Activated T-helper 1 cell treated with anti-CD3 and anti-CD28 coated beads, Interleukin-12 subunit alpha, Interleukin-12 subunit beta, Interleukin-2, Interleukin-4 antibody, amounts not matched to agents 30 ng/mL and 10 ng/mL and 1 ng/mL, durations not matched to agents 14 hours and 24 hours and 36 hours (primary cell): ENCODE measurements at regions of chr14 and their contacts with region 1.

Region 1: GRCh38 chr14:52552063-52552988 is at the starts of genes GPR137C and TXNDC16:
- DNase-seq: peak; percentile 99
- H3K4me3 Mint-ChIP-seq: peak within 1 kb of the TSS; percentile 92
- H3K27ac Mint-ChIP-seq: peak within 1 kb of the TSS; percentile 91
- H3K4me1 Mint-ChIP-seq: peaks cover 40% of the 10 kb centered on the region
- H3K27me3 Mint-ChIP-seq: peaks cover 25% of the 10 kb centered on the region
- total RNA-seq, gene GPR137C: 0.10 and 0.34 TPM in 2 replicates
- total RNA-seq, gene TXNDC16: 4.0 and 4.8 TPM in 2 replicates

Region 2: DNA sequence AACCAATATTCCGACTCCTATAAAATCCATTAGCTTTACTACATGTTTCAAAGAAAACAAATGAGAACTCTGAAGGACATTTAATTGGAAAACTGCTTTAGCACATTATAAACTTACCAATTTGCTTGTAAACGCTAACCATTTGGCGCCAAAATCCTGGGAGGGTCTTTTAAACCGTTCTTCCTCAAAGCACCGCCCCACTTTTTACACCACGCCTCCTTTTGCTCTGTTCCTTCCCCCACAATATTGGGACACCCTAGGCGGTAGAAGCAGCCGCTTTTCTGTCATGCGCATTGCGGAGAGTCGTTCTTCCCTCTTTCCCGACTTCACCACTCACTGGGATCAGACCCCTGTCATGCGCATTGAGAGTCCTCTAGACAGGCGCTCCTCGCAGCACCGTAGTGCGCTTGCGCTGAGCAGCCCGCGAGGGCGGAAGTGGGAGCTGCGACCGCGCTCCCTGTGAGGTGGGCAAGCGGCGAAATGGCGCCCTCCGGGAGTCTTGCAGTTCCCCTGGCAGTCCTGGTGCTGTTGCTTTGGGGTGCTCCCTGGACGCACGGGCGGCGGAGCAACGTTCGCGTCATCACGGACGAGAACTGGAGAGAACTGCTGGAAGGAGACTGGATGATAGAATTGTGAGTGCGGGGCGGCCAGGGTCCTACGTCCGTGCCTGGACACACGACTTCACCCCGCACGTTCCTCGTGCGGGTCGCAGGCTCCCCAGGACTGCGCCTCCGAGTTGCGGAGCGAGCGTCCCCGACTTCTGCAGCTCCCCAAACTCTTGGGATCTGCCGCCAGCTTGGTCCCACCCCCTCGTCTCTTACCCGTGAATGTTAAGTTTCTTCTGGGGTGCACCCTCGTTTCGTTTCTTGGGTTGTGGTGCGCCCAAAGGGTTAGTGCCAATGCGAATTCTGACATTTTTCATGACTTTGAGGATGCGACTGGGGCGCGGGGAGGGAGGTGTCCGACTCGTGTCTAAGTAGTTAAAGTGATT is 1312.2 kb before region 1 on chr14 and contains the start of gene TMX1:
- intact Hi-C with region 1: loop called (anchors 2 kb)
- DNase-seq: peak; percentile 87
- H3K4me3 Mint-ChIP-seq: no peak within 1 kb of the TSS
- H3K27ac Mint-ChIP-seq: no peak within 1 kb of the TSS
- H3K4me1 Mint-ChIP-seq: peaks cover 12% of the 10 kb centered on the region
- H3K27me3 Mint-ChIP-seq: no peaks in the 10 kb centered on the region
- total RNA-seq, gene TMX1: 51.1 and 51.3 TPM in 2 replicates

Region 3: GRCh38 chr14:51989293-51990234 is 562.8 kb before region 1 on chr14 and contains the start of gene RTRAF:
- intact Hi-C with region 1: loop called (anchors 1 kb)
- DNase-seq: peak; percentile 89
- H3K4me3 Mint-ChIP-seq: peak within 1 kb of the TSS; percentile 94
- H3K27ac Mint-ChIP-seq: peak within 1 kb of the TSS; percentile 91
- H3K4me1 Mint-ChIP-seq: peaks cover 31% of the 10 kb centered on the region
- H3K27me3 Mint-ChIP-seq: no peaks in the 10 kb centered on the region
- total RNA-seq, gene RTRAF: 215 and 230 TPM in 2 replicates

Region 4: DNA sequence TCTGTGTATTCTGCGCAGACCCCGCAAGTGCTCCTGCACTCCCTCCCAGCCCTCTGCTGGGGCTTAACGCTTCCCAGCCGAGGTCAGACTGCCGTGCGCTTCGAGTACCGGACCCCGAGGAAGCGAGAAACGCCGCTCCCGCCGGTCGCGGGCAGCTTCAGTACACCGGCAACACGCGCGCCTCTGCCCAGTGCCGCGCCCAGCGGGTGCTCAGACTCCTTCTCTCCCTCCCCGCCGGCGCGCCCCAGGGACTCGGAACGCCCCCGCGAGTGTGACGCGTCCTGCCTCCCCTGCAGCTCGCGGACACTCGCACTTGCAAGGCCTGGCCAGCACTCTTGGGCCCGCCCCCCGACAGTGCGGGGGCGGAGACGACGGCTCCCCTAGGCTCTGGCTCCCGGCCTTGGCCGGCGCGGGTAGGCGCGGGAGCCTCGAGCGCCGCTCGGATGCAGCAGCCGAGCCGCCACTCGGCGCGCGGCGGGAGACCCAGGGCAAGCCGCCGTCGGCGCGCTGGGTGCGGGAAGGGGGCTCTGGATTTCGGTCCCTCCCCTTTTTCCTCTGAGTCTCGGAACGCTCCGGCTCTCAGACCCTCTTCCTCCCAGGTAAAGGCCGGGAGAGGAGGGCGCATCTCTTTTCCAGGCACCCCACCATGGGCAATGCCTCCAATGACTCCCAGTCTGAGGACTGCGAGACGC is 238.3 kb before region 1 on chr14 and contains the start of gene PTGER2:
- intact Hi-C with region 1: loop called (anchors 1 kb)
- DNase-seq: peak; percentile 85
- H3K4me3 Mint-ChIP-seq: peak within 1 kb of the TSS; percentile 98
- H3K27ac Mint-ChIP-seq: peak within 1 kb of the TSS; percentile 99
- H3K4me1 Mint-ChIP-seq: peaks cover 71% of the 10 kb centered on the region
- H3K27me3 Mint-ChIP-seq: peaks cover 1% of the 10 kb centered on the region
- total RNA-seq, gene PTGER2: 67.4 and 67.9 TPM in 2 replicates

Region 5: DNA sequence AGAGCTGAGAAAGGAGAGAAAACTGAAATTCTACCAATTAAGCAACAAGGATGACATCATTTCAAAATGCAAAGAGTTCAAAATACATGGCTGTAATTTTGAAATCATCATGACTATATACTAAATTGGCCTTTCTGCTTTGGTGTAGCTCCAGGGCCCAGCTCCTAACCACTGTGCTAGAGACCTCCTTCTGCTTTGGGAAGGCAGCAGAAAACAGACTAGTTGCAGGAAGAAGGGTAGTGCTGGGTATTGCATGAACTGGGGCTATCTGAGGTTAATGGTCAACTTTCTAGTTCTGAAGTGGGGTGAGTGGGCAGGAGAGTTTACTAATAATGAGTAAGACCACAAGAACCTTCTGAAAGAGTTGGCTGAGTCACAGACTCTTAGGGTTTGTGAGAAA is 172.0 kb before region 1 on chr14:
- intact Hi-C with region 1: no loop called
- DNase-seq: no peak
- H3K4me3 Mint-ChIP-seq: no peak overlapping the region
- H3K27ac Mint-ChIP-seq: no peak overlapping the region
- H3K4me1 Mint-ChIP-seq: peaks cover 8% of the 10 kb centered on the region
- H3K27me3 Mint-ChIP-seq: no peaks in the 10 kb centered on the region

Region 6: DNA sequence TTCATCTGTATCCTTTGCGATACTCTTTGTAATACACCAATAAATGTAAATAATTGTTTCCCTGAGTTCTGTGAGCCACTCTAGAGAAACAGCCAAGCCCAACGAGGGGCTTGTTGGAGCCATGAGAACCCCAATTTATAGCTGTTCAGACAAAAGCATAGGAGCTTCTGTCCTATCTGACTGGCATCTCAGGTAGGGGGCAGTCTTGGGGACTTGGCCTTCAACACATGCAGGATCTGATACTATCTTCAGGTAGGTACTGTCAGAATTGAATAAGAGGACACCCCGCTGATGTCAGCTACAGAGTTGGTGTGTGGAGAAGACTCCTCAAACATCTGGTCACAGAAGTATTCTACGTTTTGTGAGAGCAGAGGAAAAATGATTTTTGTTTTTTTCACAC is 25.3 kb before region 1 on chr14:
- intact Hi-C with region 1: loop called (anchors 2 kb)
- DNase-seq: no peak
- H3K4me3 Mint-ChIP-seq: no peak overlapping the region
- H3K27ac Mint-ChIP-seq: no peak overlapping the region
- H3K4me1 Mint-ChIP-seq: no peaks in the 10 kb centered on the region
- H3K27me3 Mint-ChIP-seq: no peaks in the 10 kb centered on the region

Region 7: DNA sequence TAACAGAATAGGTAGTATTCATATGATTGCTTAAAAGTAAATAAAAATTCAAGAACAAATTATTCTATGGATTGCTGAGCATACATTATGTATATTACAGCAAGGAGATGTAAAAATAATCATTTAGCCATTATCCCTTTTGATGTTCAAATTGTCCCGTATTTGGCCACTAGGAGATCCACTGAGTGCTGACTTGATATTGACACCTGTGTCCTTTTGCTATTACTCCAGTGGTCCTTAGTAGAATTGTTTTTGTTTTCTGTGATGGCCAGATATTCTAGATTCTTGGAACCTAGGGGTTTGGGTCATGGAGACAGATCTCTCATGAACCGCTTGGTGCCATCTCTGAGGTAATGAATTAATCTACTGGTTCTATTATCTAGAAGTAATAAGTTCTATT is 126.3 kb after region 1 on chr14:
- intact Hi-C with region 1: no loop called
- DNase-seq: no peak
- H3K4me3 Mint-ChIP-seq: no peak overlapping the region
- H3K27ac Mint-ChIP-seq: no peak overlapping the region
- H3K4me1 Mint-ChIP-seq: peaks cover 16% of the 10 kb centered on the region
- H3K27me3 Mint-ChIP-seq: no peaks in the 10 kb centered on the region

Region 8: GRCh38 chr14:52706724-52707706 is 154.7 kb after region 1 on chr14 and contains the start of gene PSMC6:
- intact Hi-C with region 1: loop called (anchors 1 kb)
- DNase-seq: peak; percentile 86
- H3K4me3 Mint-ChIP-seq: peak within 1 kb of the TSS; percentile 100
- H3K27ac Mint-ChIP-seq: peak within 1 kb of the TSS; percentile 97
- H3K4me1 Mint-ChIP-seq: peaks cover 41% of the 10 kb centered on the region
- H3K27me3 Mint-ChIP-seq: peaks cover 3% of the 10 kb centered on the region
- total RNA-seq, gene PSMC6: 130 and 132 TPM in 2 replicates

Region 9: GRCh38 chr14:52755607-52756253 is 203.4 kb after region 1 on chr14:
- intact Hi-C with region 1: no loop called
- DNase-seq: no peak
- H3K4me3 Mint-ChIP-seq: no peak overlapping the region
- H3K27ac Mint-ChIP-seq: no peak overlapping the region
- H3K4me1 Mint-ChIP-seq: no peaks in the 10 kb centered on the region
- H3K27me3 Mint-ChIP-seq: no peaks in the 10 kb centered on the region

Region 10: GRCh38 chr14:52950898-52951689 is 398.8 kb after region 1 on chr14 and contains the start of gene FERMT2:
- intact Hi-C with region 1: loop called (anchors 2 kb)
- DNase-seq: no peak
- H3K4me3 Mint-ChIP-seq: peak within 1 kb of the TSS; percentile 83
- H3K27ac Mint-ChIP-seq: peak within 1 kb of the TSS; percentile 19
- H3K4me1 Mint-ChIP-seq: peaks cover 14% of the 10 kb centered on the region
- H3K27me3 Mint-ChIP-seq: peaks cover 57% of the 10 kb centered on the region
- total RNA-seq, gene FERMT2: 1.3 and 2.1 TPM in 2 replicates